Transverse colon (tissue), 4 donors: ENCODE measurements at regions of chr19 and their contacts with region 1.

Region 1: GRCh38 chr19:1249298-1249989 is 1.1 kb downstream of the MIDN start:
- DNase-seq: peak; percentile 96
- H3K4me3 ChIP-seq: peak overlapping the region; percentile 80 to 94 (median 89)
- H3K27ac ChIP-seq: peak overlapping the region; percentile 98 to 99 (median 98)
- H3K4me1 ChIP-seq: peaks cover 39 to 64% (median 61%) of the 10 kb centered on the region in 4 donors
- H3K27me3 ChIP-seq: no peaks in the 10 kb centered on the region
- CTCF ChIP-seq: no peak
- EP300 ChIP-seq: peak; percentile 42
- POLR2A ChIP-seq: peak; percentile 93

Region 2: GRCh38 chr19:1020868-1021425 is 228.5 kb before region 1 on chr19 and contains the start of gene TMEM259:
- in situ Hi-C with region 1: no loop called
- intact Hi-C with region 1: loop called (anchors 10 kb)
- DNase-seq: peak; percentile 98
- H3K4me3 ChIP-seq: peak within 1 kb of the TSS; percentile 46 to 100 (median 76)
- H3K27ac ChIP-seq: peak within 1 kb of the TSS; percentile 92 to 98 (median 95)
- H3K4me1 ChIP-seq: peaks cover 44 to 56% (median 48%) of the 10 kb centered on the region in 4 donors
- H3K27me3 ChIP-seq: no peaks in the 10 kb centered on the region
- CTCF ChIP-seq: no peak
- EP300 ChIP-seq: no peak
- POLR2A ChIP-seq: peak; percentile 68
- total RNA-seq, gene TMEM259: 226 to 676 (median 303) TPM

Region 3: GRCh38 chr19:1103708-1104310 is 145.6 kb before region 1 on chr19 and contains the start of gene GPX4:
- in situ Hi-C with region 1: no loop called
- intact Hi-C with region 1: loop called (anchors 10 kb)
- DNase-seq: peak; percentile 100
- H3K4me3 ChIP-seq: peak within 1 kb of the TSS; percentile 52 to 98 (median 91)
- H3K27ac ChIP-seq: peak within 1 kb of the TSS; percentile 98 to 100 (median 100)
- H3K4me1 ChIP-seq: peaks cover 23 to 62% (median 40%) of the 10 kb centered on the region in 4 donors
- H3K27me3 ChIP-seq: no peaks in the 10 kb centered on the region
- CTCF ChIP-seq: peak in 1 of 5 experiments; percentile 19
- EP300 ChIP-seq: no peak
- POLR2A ChIP-seq: peak; percentile 98
- total RNA-seq, gene GPX4: 115 to 426 (median 261) TPM

Region 4: GRCh38 chr19:1295169-1296012 is 45.9 kb after region 1 on chr19:
- in situ Hi-C with region 1: no loop called
- intact Hi-C with region 1: no loop called
- DNase-seq: no peak
- H3K4me3 ChIP-seq: no peak overlapping the region
- H3K27ac ChIP-seq: no peak overlapping the region
- H3K4me1 ChIP-seq: peaks cover 11 to 27% (median 26%) of the 10 kb centered on the region in 4 donors
- H3K27me3 ChIP-seq: peaks cover 44% of the 10 kb centered on the region
- CTCF ChIP-seq: no peak
- EP300 ChIP-seq: no peak
- POLR2A ChIP-seq: no peak

Region 5: DNA sequence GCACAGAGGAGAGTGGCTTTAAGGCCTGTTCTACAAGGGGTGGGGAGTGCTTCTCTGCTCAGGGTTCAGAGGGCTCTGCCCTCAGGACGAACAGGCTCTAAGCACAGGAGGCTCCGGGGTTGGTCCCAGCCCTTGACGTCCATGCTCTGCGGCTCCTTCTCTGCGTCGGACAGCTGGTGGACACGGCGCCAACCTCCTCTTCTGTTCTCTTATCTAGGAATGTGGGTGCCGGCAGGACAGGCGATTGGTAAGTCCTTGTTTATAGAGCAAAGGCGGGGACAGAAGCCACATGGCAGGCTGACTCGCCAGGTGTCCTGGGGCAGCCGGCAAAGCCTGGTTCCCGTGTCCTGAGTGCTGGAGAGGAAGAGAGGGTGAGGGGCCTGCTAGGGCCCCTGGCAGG is 180.3 kb after region 1 on chr19:
- in situ Hi-C with region 1: no loop called
- intact Hi-C with region 1: no loop called
- DNase-seq: peak; percentile 36
- H3K4me3 ChIP-seq: no peak overlapping the region
- H3K27ac ChIP-seq: peak overlapping the region in 1 of 4 donors; percentile 28
- H3K4me1 ChIP-seq: peaks cover 0 to 3% (median 0%) of the 10 kb centered on the region in 4 donors
- H3K27me3 ChIP-seq: no peaks in the 10 kb centered on the region
- CTCF ChIP-seq: no peak
- EP300 ChIP-seq: no peak
- POLR2A ChIP-seq: no peak